Endothelial cell of umbilical vein (primary cell): ENCODE measurements at regions of chr7 and their contacts with region 1.

Region 1: DNA sequence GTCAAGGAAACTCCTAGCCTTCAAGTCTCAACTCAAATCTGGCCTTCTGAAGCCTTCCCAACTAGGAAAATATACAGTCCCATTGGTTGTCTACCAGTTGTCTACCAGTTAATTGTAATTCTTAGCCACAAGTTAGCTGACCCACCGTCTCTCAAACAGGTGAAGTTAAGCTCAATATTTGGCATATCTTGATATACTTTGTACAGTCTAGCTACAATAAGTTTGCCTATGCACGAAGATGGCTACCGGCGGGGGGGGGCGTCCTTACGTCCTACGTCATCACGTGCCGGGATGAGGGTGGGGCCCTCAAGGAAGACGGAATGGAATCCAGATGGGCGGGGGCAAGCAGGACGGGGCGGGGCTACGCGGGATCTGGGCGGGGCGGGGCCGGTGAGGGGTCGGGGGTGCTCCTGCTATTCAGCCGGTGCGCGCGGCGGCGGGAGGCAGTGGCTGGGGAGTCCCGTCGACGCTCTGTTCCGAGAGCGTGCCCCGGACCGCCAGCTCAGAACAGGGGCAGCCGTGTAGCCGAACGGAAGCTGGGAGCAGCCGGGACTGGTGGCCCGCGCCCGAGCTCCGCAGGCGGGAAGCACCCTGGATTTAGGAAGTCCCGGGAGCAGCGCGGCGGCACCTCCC is at the start of gene AHR:
- DNase-seq: peak; percentile 89
- H3K4me3 ChIP-seq: peak within 1 kb of the TSS; percentile 62 to 97 (median 90)
- H3K27ac ChIP-seq: peak within 1 kb of the TSS; percentile 56
- H3K4me1 ChIP-seq: peaks cover 29% of the 10 kb centered on the region
- H3K27me3 ChIP-seq: no peaks in the 10 kb centered on the region
- CTCF ChIP-seq: no peak
- POLR2A ChIP-seq: peak; percentile 65
- total RNA-seq, gene AHR: 29.3 and 31.8 TPM in 2 replicates

Region 2: DNA sequence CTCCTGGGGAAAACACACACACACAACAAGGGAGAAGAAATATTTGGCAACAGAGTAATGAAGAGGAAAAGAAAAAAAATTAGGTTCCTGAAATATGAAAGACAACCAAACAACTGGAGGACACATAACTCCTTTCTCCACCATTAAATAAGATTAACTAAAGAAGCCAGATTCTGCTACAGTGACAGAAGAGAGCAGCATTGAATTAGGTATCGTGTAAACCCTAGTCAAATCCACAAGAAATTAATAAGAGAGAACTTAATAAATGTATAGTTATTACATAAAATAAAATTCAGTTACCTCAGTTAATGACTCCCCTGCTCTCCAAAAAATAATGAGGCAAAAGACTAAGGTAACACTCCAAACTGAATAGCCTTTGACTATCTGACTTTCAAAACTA is 1183.7 kb before region 1 on chr7:
- CTCF ChIA-PET with region 1: interaction called, 5 read pairs
- POLR2A ChIA-PET with region 1: no interaction called
- dilution Hi-C with region 1: no loop called
- intact Hi-C with region 1: loop called (anchors 10 kb)
- DNase-seq: peak; percentile 53
- H3K4me3 ChIP-seq: no peak overlapping the region
- H3K27ac ChIP-seq: no peak overlapping the region
- H3K4me1 ChIP-seq: no peaks in the 10 kb centered on the region
- H3K27me3 ChIP-seq: no peaks in the 10 kb centered on the region
- CTCF ChIP-seq: peak; percentile 17 to 25
- POLR2A ChIP-seq: no peak

Region 3: DNA sequence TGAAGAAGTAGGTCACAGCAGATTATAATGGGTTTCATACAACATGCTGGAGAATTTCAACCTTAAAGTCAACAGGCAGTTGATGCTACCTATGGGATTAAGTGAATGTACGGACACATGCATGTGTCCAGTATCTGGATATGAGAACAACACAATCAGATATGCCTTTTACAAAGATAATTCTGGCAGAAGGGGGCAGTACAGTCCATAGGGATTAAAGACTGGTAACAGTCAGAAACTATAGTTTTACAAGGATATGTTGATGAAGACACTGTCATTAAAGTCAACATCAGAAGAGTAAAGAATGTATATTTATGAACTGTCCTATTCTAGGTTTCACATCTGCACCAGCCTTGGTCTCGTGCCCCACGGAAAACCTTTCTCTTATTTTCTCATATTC is 694.3 kb before region 1 on chr7:
- CTCF ChIA-PET with region 1: no interaction called
- POLR2A ChIA-PET with region 1: no interaction called
- dilution Hi-C with region 1: no loop called
- intact Hi-C with region 1: no loop called
- DNase-seq: peak; percentile 21
- H3K4me3 ChIP-seq: no peak overlapping the region
- H3K27ac ChIP-seq: no peak overlapping the region
- H3K4me1 ChIP-seq: no peaks in the 10 kb centered on the region
- H3K27me3 ChIP-seq: no peaks in the 10 kb centered on the region
- CTCF ChIP-seq: no peak
- POLR2A ChIP-seq: no peak

Region 4: DNA sequence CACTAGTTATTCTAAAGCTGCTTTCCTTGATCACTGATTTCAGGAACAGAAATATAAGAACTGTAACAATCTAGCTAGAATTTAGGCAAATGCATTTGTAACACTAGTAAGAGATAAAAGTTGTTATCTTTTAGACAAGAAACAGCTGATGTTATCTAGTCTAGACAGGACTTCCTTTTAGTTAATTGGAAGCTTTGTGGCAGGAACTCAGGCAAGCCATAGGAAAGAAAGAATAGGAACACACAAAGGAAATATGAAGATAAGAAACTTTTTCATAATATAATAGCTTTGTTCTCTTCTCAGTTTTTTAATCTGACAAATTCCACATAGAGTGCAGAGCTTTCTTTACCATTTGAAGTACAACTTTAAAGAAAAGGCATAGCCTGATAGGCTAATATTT is 357.5 kb before region 1 on chr7:
- CTCF ChIA-PET with region 1: interaction called, 11 read pairs
- POLR2A ChIA-PET with region 1: no interaction called
- dilution Hi-C with region 1: no loop called
- intact Hi-C with region 1: no loop called
- DNase-seq: peak; percentile 85
- H3K4me3 ChIP-seq: no peak overlapping the region
- H3K27ac ChIP-seq: peak overlapping the region; percentile 75
- H3K4me1 ChIP-seq: peaks cover 31% of the 10 kb centered on the region
- H3K27me3 ChIP-seq: no peaks in the 10 kb centered on the region
- CTCF ChIP-seq: no peak
- POLR2A ChIP-seq: peak; percentile 70

Region 5: GRCh38 chr7:17046666-17047065 is 251.7 kb before region 1 on chr7:
- CTCF ChIA-PET with region 1: interaction called, 10 read pairs
- POLR2A ChIA-PET with region 1: no interaction called
- dilution Hi-C with region 1: no loop called
- intact Hi-C with region 1: loop called (anchors 1 kb)
- DNase-seq: no peak
- H3K4me3 ChIP-seq: no peak overlapping the region
- H3K27ac ChIP-seq: no peak overlapping the region
- H3K4me1 ChIP-seq: peaks cover 28% of the 10 kb centered on the region
- H3K27me3 ChIP-seq: no peaks in the 10 kb centered on the region
- CTCF ChIP-seq: no peak
- POLR2A ChIP-seq: no peak

Region 6: GRCh38 chr7:17152721-17153120 is 145.6 kb before region 1 on chr7:
- CTCF ChIA-PET with region 1: no interaction called
- POLR2A ChIA-PET with region 1: no interaction called
- dilution Hi-C with region 1: no loop called
- intact Hi-C with region 1: no loop called
- DNase-seq: no peak
- H3K4me3 ChIP-seq: no peak overlapping the region
- H3K27ac ChIP-seq: no peak overlapping the region
- H3K4me1 ChIP-seq: no peaks in the 10 kb centered on the region
- H3K27me3 ChIP-seq: no peaks in the 10 kb centered on the region
- CTCF ChIP-seq: no peak
- POLR2A ChIP-seq: no peak

Region 7: GRCh38 chr7:17311952-17312351 is 13.6 kb after region 1 on chr7:
- CTCF ChIA-PET with region 1: interaction called, 57 read pairs
- POLR2A ChIA-PET with region 1: interaction called, 3 read pairs
- dilution Hi-C with region 1: no loop called
- intact Hi-C with region 1: no loop called
- DNase-seq: no peak
- H3K4me3 ChIP-seq: no peak overlapping the region
- H3K27ac ChIP-seq: no peak overlapping the region
- H3K4me1 ChIP-seq: peaks cover 33% of the 10 kb centered on the region
- H3K27me3 ChIP-seq: no peaks in the 10 kb centered on the region
- CTCF ChIP-seq: no peak
- POLR2A ChIP-seq: no peak

Region 8: DNA sequence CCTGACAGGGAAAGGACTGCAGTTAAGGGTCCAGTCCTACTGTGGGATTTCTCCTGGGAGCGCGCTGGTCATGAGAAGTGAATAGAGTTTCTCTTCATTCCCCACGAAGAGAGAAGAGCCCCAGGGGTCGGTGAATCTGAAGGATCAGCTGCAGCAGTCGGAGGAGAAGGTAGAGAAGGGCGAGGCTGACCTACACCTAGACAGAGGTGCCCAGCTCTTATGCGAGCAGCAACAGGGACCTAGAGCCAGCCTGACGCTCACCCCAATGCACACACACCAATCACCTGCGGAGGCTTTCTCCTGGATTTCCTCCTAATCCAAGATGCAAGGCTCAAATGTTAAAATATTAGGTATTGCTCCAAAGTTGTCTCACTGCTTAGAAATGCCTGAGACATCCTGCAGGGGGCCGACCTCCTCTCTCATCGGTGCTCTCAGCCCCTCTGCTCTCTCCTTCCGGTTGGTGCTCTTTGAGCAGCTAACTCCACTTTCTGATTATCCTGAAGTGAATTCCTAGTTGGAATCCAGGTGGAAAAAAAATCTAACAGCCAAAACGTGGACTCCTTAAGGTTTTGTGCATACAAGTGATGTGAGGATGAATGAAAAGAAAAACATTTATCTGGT is 176.5 kb after region 1 on chr7:
- CTCF ChIA-PET with region 1: no interaction called
- POLR2A ChIA-PET with region 1: no interaction called
- dilution Hi-C with region 1: no loop called
- intact Hi-C with region 1: no loop called
- DNase-seq: no peak
- H3K4me3 ChIP-seq: no peak overlapping the region
- H3K27ac ChIP-seq: no peak overlapping the region
- H3K4me1 ChIP-seq: no peaks in the 10 kb centered on the region
- H3K27me3 ChIP-seq: no peaks in the 10 kb centered on the region
- CTCF ChIP-seq: peak in 1 of 2 donors; percentile 29
- POLR2A ChIP-seq: no peak

Region 9: GRCh38 chr7:17523813-17524741 is 225.8 kb after region 1 on chr7:
- CTCF ChIA-PET with region 1: interaction called, 32 read pairs
- POLR2A ChIA-PET with region 1: interaction called, 3 read pairs
- dilution Hi-C with region 1: no loop called
- intact Hi-C with region 1: no loop called
- DNase-seq: no peak
- H3K4me3 ChIP-seq: no peak overlapping the region
- H3K27ac ChIP-seq: no peak overlapping the region
- H3K4me1 ChIP-seq: peaks cover 22% of the 10 kb centered on the region
- H3K27me3 ChIP-seq: no peaks in the 10 kb centered on the region
- CTCF ChIP-seq: no peak
- POLR2A ChIP-seq: no peak

Region 10: DNA sequence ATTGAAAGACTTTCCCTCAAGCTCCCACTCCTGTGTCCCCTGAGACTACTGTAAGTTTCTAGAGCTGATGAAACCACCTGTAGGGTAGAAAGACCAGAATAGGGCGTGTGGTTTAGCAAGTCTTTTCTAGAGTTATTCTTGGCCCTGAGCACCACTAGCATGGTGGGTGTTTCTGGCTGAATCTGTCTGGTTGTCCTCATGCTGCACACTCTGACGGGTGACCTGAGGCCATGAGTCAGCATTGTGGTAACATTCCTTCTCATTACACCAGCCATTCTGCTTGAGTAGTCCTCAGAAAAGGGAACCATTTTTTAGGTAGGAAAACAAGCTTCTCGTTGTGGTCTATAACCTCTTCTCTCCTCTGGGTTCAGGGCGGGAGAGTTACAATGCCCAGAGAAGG is 391.7 kb after region 1 on chr7:
- CTCF ChIA-PET with region 1: no interaction called
- POLR2A ChIA-PET with region 1: no interaction called
- dilution Hi-C with region 1: no loop called
- intact Hi-C with region 1: no loop called
- DNase-seq: no peak
- H3K4me3 ChIP-seq: no peak overlapping the region
- H3K27ac ChIP-seq: no peak overlapping the region
- H3K4me1 ChIP-seq: no peaks in the 10 kb centered on the region
- H3K27me3 ChIP-seq: no peaks in the 10 kb centered on the region
- CTCF ChIP-seq: no peak
- POLR2A ChIP-seq: no peak

Region 11: GRCh38 chr7:17706734-17707133 is 408.4 kb after region 1 on chr7:
- CTCF ChIA-PET with region 1: interaction called, 14 read pairs
- POLR2A ChIA-PET with region 1: no interaction called
- dilution Hi-C with region 1: no loop called
- intact Hi-C with region 1: loop called (anchors 1 kb)
- DNase-seq: peak; percentile 74
- H3K4me3 ChIP-seq: no peak overlapping the region
- H3K27ac ChIP-seq: no peak overlapping the region
- H3K4me1 ChIP-seq: no peaks in the 10 kb centered on the region
- H3K27me3 ChIP-seq: peaks cover 3 to 6% of the 10 kb centered on the region in 2 experiments
- CTCF ChIP-seq: peak; percentile 48 to 64
- POLR2A ChIP-seq: no peak